ENCODE measurements at regions of chr7 and their contacts with region 1.

Region 1: GRCh38 chr7:1473864-1474512 is 14.7 kb upstream of the MICALL2 start:
- DNase-seq: peak; percentile 89
- H3K4me3 Mint-ChIP-seq: no peak overlapping the region
- H3K27ac Mint-ChIP-seq: peak overlapping the region; percentile 46
- H3K4me1 Mint-ChIP-seq: peaks cover 11% of the 10 kb centered on the region
- H3K27me3 Mint-ChIP-seq: no peaks in the 10 kb centered on the region

Region 2: GRCh38 chr7:1439373-1440363 is 34.3 kb before region 1 on chr7:
- CTCF ChIA-PET with region 1: no interaction called
- POLR2A ChIA-PET with region 1: no interaction called
- DNase-seq: no peak
- H3K4me3 Mint-ChIP-seq: no peak overlapping the region
- H3K27ac Mint-ChIP-seq: no peak overlapping the region
- H3K4me1 Mint-ChIP-seq: no peaks in the 10 kb centered on the region
- H3K27me3 Mint-ChIP-seq: no peaks in the 10 kb centered on the region

Region 3: GRCh38 chr7:1484569-1484968 is 10.6 kb after region 1 on chr7:
- CTCF ChIA-PET with region 1: interaction called, 10 read pairs
- POLR2A ChIA-PET with region 1: no interaction called
- DNase-seq: no peak
- H3K4me3 Mint-ChIP-seq: no peak overlapping the region
- H3K27ac Mint-ChIP-seq: no peak overlapping the region
- H3K4me1 Mint-ChIP-seq: no peaks in the 10 kb centered on the region
- H3K27me3 Mint-ChIP-seq: no peaks in the 10 kb centered on the region